PC-9 (cell line): ENCODE measurements at regions of chr2 and their contacts with region 1.

Region 1: DNA sequence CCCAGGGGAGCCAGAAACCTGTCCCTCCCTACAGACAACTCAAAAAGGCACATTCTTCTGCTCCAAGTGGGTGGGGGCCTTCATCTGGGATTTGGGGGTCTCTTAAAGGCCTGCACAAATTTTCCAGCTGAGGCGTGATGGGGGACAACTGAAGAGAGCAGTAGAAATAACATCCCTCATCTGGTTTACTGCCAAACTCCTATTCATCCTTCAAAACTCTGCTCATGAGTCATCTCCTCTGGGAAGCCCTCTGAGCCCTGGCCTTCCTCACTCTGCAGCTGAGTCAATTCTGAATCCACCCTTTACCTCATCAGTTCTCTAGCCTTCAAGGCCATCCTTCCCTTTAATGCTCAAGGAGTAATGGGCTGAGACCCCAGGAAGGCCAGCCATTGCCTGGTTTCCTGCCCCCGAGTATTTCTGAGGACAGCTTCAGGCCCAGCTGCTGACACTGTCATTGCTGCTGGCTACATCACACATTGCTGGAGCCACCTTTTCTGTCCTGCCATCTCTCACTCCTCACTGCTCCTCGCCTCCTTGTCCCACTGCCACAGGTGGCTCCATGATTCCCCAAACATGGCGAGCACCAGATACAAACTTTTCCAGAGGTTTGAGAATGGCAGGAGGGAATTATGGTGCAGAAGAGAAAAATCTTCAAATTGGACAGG is 32.2 kb upstream of the GLI2 start:
- DNase-seq: no peak
- H3K4me3 ChIP-seq: no peak overlapping the region
- H3K27ac ChIP-seq: no peak overlapping the region
- H3K4me1 ChIP-seq: no peaks in the 10 kb centered on the region
- H3K27me3 ChIP-seq: peaks cover 5% of the 10 kb centered on the region; the same call in 1 of the 2 replicates
- CTCF ChIP-seq: no peak

Region 2: DNA sequence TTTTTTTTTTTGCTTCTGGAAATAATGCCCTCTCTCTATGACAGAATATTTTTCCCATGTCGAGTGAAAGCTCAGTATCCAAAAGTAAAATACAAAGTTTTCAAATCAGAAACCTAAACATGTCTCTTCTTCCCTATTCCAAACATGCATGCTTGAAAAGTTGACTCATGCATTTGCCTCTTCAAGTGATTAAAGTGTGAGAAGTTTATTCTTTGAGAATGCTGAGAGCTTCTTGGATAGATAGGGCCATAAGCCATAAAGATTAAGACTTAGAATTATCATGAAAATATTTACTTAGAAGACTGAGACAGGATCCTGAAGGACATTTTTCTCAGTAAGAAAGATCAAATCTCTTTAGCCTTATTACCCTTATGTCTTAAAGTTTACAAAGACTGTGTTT is 789.2 kb before region 1 on chr2:
- CTCF ChIA-PET with region 1: no interaction called
- POLR2A ChIA-PET with region 1: no interaction called
- intact Hi-C with region 1: no loop called
- DNase-seq: no peak
- H3K4me3 ChIP-seq: no peak overlapping the region
- H3K27ac ChIP-seq: no peak overlapping the region
- H3K4me1 ChIP-seq: no peaks in the 10 kb centered on the region
- H3K27me3 ChIP-seq: no peaks in the 10 kb centered on the region
- CTCF ChIP-seq: no peak

Region 3: GRCh38 chr2:120352701-120353590 is 350.5 kb before region 1 on chr2:
- CTCF ChIA-PET with region 1: no interaction called
- POLR2A ChIA-PET with region 1: no interaction called
- intact Hi-C with region 1: no loop called
- DNase-seq: peak; percentile 82 to 98
- H3K4me3 ChIP-seq: no peak overlapping the region
- H3K27ac ChIP-seq: peak overlapping the region; percentile 49
- H3K4me1 ChIP-seq: peaks cover 44% of the 10 kb centered on the region
- H3K27me3 ChIP-seq: no peaks in the 10 kb centered on the region
- CTCF ChIP-seq: no peak

Region 4: GRCh38 chr2:120729406-120730399 is 26.2 kb after region 1 on chr2:
- CTCF ChIA-PET with region 1: no interaction called
- POLR2A ChIA-PET with region 1: interaction called, 10 read pairs
- intact Hi-C with region 1: no loop called
- DNase-seq: peak; percentile 36 to 56
- H3K4me3 ChIP-seq: no peak overlapping the region
- H3K27ac ChIP-seq: no peak overlapping the region
- H3K4me1 ChIP-seq: peaks cover 4% of the 10 kb centered on the region
- H3K27me3 ChIP-seq: peaks cover 18% of the 10 kb centered on the region; the same call in 1 of the 2 replicates
- CTCF ChIP-seq: no peak

Region 5: DNA sequence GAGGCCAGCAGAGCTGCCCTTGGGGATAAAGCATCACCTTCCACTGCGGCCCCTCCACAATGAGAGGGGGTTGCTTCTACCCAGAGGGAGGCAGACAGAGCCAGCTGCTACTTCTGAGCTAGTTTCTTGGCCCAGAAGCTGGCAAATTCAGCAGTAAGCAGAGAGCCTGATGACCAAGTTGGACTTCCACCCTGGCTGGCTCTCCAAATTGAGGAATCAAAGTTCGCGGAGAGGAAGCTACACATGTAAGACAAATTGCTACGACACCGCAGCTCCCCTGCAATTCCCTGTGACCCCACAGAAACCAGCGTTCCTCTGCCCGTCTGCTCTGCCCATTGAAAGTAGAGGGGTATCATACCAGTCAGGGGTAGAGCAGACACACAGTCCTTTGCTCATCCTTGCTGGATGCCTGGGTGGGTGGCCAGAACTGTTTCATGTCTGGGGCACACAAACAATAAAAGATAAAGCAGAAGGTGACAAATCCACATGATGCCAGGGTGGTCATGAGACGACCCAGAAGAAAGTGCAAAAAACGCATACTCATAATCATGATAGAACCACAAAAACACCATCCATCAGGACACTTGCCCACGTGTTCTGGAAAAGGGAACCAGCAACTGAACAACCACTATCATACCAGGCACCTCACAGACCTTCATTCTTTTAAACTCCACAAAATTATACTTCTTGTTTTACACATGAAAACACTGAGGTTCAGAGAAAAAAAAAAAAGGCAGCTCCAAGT is 576.2 kb after region 1 on chr2:
- CTCF ChIA-PET with region 1: interaction called, 10 read pairs
- POLR2A ChIA-PET with region 1: no interaction called
- intact Hi-C with region 1: no loop called
- DNase-seq: no peak
- H3K4me3 ChIP-seq: no peak overlapping the region
- H3K27ac ChIP-seq: no peak overlapping the region
- H3K4me1 ChIP-seq: peaks cover 14% of the 10 kb centered on the region; the same call in 1 of the 2 replicates
- H3K27me3 ChIP-seq: no peaks in the 10 kb centered on the region
- CTCF ChIP-seq: no peak